HCT116 (cell line): ENCODE measurements at regions of chr14 and their contacts with region 1.

Region 1: DNA sequence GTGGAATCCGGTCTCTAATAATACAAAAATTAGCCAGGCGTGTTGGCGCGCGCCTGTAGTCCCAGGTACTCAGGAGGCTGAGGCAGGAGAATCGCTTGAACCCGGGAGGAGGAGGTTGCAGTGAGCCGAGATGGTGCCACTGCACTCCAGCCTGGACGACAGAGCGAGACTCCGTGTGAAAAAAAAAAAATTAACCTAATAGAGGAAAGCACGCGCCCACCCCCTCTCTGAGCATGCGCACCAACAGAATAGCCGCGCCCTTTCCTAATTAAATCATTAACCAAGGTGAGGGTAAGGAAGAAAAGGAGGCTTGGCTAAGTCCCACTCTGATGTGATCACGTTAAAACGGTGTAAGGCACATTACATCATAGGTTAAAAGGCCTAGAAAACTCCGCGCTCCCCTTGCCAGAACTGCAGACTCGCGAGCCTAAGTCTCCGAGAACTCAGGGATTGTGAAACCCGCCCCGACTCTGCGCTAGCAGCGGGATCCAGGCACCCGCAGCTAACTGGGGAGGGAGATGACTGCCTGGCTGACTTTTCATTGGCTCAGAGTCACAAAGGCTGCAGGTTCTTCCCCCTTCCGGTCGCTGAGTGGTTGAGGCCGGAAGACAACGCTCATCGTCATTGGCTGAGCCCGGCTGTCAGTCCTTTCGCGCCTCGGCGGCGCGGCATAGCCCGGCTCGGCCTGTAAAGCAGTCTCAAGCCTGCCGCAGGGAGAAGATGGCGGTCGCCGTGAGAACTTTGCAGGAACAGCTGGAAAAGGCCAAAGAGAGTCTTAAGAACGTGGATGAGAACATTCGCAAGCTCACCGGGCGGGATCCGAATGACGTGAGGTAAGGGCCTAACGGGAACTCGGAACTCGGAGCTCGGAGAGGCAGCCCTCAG is at the start of gene PNN:
- DNase-seq: peak; percentile 99
- ATAC-seq: peak; percentile 87
- H3K4me3 ChIP-seq: peak within 1 kb of the TSS; percentile 85 to 96
- H3K27ac ChIP-seq: peak within 1 kb of the TSS; percentile 91
- H3K4me1 ChIP-seq: peaks cover 8 to 27% of the 10 kb centered on the region in 2 experiments; a peak in 3 of 4 replicates
- H3K27me3 ChIP-seq: no peaks in the 10 kb centered on the region
- CTCF ChIP-seq: no peak
- POLR2A ChIP-seq: peak; percentile 93
- RAD21 ChIP-seq: no peak
- total RNA-seq, gene PNN: 97.9 TPM

Region 2: GRCh38 chr14:39114073-39114838 is 60.5 kb before region 1 on chr14 and contains the start of gene GEMIN2:
- CTCF ChIA-PET with region 1: interaction called, 4 read pairs
- POLR2A ChIA-PET with region 1: interaction called, 18 read pairs
- RAD21 ChIA-PET with region 1: no interaction called
- intact Hi-C with region 1: loop called (anchors 5 kb)
- DNase-seq: peak; percentile 88
- ATAC-seq: peak; percentile 97
- H3K4me3 ChIP-seq: peak within 1 kb of the TSS; percentile 65 to 84
- H3K27ac ChIP-seq: peak within 1 kb of the TSS; percentile 63
- H3K4me1 ChIP-seq: peaks cover 4 to 16% of the 10 kb centered on the region in 2 experiments; a peak in 3 of 4 replicates
- H3K27me3 ChIP-seq: no peaks in the 10 kb centered on the region
- CTCF ChIP-seq: no peak
- POLR2A ChIP-seq: peak; percentile 96
- RAD21 ChIP-seq: no peak
- total RNA-seq, gene GEMIN2: 27.3 TPM

Region 3: DNA sequence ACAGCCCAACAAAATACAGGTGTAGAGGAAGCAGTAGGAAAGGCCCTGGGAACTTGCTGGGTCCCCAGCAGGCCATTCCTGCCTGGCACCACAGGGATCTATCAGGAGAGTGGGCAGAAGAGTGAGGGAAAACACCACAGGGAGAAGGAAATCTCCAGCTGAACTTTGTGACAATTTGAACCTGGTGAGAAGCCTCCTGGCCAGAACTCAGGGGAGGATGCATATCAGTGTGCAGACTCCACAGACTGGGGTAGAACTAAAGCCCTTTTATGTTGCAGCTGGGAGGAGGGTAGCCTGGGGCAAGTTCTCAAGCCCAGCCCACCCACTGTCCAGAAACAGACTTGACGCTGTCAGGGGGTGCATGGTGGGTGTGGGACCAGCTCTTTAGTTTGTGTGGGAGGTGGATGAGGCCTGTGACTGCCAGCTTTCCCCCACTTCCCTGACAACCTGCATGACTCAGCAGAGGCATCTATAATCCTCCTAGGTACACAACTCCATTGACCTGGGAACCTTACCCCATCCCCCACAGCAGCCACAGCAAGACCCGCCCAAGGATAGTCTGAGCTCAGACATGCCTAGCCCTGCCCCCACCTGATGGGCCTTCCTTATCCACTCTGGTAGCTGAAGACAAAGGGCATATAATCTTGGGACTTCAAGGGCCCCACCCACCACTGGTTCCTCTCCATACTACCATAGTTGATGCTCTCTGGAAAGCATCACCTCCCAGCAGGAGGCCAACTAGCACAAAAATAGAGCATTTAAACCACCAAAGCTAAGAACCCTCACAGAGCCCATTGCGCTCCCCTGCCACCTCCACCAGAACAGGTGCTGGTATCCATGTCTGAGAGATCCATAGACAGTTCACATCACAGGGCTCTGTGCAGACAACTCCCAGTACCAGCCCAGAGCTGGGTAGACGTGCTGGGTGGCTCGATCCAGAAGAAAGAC is 29.1 kb after region 1 on chr14:
- CTCF ChIA-PET with region 1: no interaction called
- POLR2A ChIA-PET with region 1: interaction called, 10 read pairs
- RAD21 ChIA-PET with region 1: no interaction called
- intact Hi-C with region 1: no loop called
- DNase-seq: peak; percentile 27
- ATAC-seq: peak; percentile 76
- H3K4me3 ChIP-seq: peak overlapping the region in 1 of 2 experiments; percentile 5; a peak in 2 of 4 replicates
- H3K27ac ChIP-seq: peak overlapping the region; percentile 80
- H3K4me1 ChIP-seq: peaks cover 16 to 41% of the 10 kb centered on the region in 2 experiments
- H3K27me3 ChIP-seq: no peaks in the 10 kb centered on the region
- CTCF ChIP-seq: no peak
- POLR2A ChIP-seq: no peak
- RAD21 ChIP-seq: no peak

Region 4: DNA sequence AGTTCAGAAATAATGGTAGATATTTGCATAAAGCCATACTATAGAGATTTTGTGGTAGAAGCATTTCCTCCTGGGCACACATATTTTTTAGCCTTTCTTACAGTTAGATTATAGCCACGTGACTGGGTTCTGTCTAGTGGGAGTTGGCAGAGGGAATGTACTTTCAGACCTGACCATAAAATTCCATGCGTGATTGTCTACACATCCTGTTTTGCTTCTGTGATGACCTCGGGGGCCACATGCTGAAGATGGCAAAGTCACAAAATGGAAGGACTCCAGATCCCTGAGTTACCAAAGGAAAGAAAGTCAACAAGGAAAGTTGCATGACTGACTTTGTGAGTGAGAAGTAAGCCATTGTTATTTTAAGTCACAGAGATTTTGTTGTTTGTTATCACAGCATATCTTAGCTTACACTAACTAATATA is 44.3 kb after region 1 on chr14:
- CTCF ChIA-PET with region 1: no interaction called
- POLR2A ChIA-PET with region 1: interaction called, 7 read pairs
- RAD21 ChIA-PET with region 1: interaction called in 1 of 2 experiments, 5 read pairs
- intact Hi-C with region 1: loop called (anchors 2 kb)
- DNase-seq: peak; percentile 32
- ATAC-seq: peak; percentile 35
- H3K4me3 ChIP-seq: peak overlapping the region in 1 of 2 experiments; percentile 22; a peak in 2 of 4 replicates
- H3K27ac ChIP-seq: peak overlapping the region; percentile 80
- H3K4me1 ChIP-seq: peaks cover 29 to 57% of the 10 kb centered on the region in 2 experiments
- H3K27me3 ChIP-seq: no peaks in the 10 kb centered on the region
- CTCF ChIP-seq: no peak
- POLR2A ChIP-seq: no peak
- RAD21 ChIP-seq: no peak

Region 5: GRCh38 chr14:39266871-39267591 is 92.2 kb after region 1 on chr14:
- CTCF ChIA-PET with region 1: no interaction called
- POLR2A ChIA-PET with region 1: interaction called, 7 read pairs
- RAD21 ChIA-PET with region 1: no interaction called
- intact Hi-C with region 1: loop called (anchors 1 kb)
- DNase-seq: peak; percentile 85
- ATAC-seq: peak; percentile 89
- H3K4me3 ChIP-seq: peak overlapping the region; percentile 85 to 93
- H3K27ac ChIP-seq: peak overlapping the region; percentile 91
- H3K4me1 ChIP-seq: peaks cover 26 to 51% of the 10 kb centered on the region in 2 experiments
- H3K27me3 ChIP-seq: no peaks in the 10 kb centered on the region
- CTCF ChIP-seq: no peak
- POLR2A ChIP-seq: peak; percentile 40
- RAD21 ChIP-seq: no peak

Region 6: DNA sequence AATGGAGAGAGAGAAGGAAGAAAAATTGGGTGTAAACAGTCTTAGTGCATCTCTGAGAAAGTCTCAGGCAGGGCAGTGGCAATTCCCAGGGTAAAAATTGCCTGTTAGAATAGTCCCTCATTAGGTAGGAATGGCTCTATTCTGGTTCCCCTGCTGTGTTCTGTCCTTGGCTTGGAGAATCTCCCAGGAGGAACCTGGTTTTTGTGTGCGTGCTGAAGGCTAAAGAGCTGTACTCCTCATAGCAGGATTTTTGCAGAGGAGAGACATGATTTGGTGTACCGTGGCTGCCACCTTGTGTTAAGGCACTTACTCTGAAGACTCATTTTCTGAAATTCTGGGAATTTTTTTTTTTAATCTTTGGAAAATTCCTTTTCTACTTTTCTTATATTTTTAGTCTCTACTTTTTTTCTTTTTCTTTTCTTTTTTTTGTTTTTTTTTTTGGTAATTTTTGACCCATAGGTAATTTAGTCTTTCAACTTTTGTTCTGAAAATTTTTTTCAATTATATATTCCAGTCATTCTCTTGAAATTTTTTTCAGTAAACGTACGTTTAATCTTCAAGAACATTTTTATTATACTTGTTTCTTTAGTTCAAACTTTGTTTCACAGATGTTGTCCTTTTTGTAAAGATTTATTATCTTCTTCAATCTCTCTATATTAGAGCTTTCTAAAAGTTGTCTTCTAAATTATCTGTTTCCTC is 193.6 kb after region 1 on chr14:
- CTCF ChIA-PET with region 1: interaction called, 3 read pairs
- POLR2A ChIA-PET with region 1: interaction called, 3 read pairs
- RAD21 ChIA-PET with region 1: no interaction called
- intact Hi-C with region 1: loop called (anchors 5 kb)
- DNase-seq: peak; percentile 44
- ATAC-seq: peak; percentile 72
- H3K4me3 ChIP-seq: no peak overlapping the region
- H3K27ac ChIP-seq: no peak overlapping the region
- H3K4me1 ChIP-seq: no peaks in the 10 kb centered on the region
- H3K27me3 ChIP-seq: no peaks in the 10 kb centered on the region
- CTCF ChIP-seq: peak; percentile 52 to 67 (median 62); a peak in 5 of 6 replicates
- POLR2A ChIP-seq: no peak
- RAD21 ChIP-seq: peak; percentile 84

Region 7: GRCh38 chr14:39432179-39432618 is 257.4 kb after region 1 on chr14 and contains the start of gene FBXO33:
- CTCF ChIA-PET with region 1: no interaction called
- POLR2A ChIA-PET with region 1: interaction called, 9 read pairs
- RAD21 ChIA-PET with region 1: no interaction called
- intact Hi-C with region 1: loop called (anchors 2 kb)
- DNase-seq: peak; percentile 92
- ATAC-seq: peak; percentile 89
- H3K4me3 ChIP-seq: peak within 1 kb of the TSS; percentile 78 to 83
- H3K27ac ChIP-seq: peak within 1 kb of the TSS; percentile 82
- H3K4me1 ChIP-seq: peaks cover 14 to 21% of the 10 kb centered on the region in 2 experiments
- H3K27me3 ChIP-seq: no peaks in the 10 kb centered on the region
- CTCF ChIP-seq: no peak
- POLR2A ChIP-seq: peak; percentile 21
- RAD21 ChIP-seq: no peak
- total RNA-seq, gene FBXO33: 9.7 TPM